Heart right ventricle (tissue), 16 donors: ENCODE measurements at regions of chr13 and their contacts with region 1.

Region 1: DNA sequence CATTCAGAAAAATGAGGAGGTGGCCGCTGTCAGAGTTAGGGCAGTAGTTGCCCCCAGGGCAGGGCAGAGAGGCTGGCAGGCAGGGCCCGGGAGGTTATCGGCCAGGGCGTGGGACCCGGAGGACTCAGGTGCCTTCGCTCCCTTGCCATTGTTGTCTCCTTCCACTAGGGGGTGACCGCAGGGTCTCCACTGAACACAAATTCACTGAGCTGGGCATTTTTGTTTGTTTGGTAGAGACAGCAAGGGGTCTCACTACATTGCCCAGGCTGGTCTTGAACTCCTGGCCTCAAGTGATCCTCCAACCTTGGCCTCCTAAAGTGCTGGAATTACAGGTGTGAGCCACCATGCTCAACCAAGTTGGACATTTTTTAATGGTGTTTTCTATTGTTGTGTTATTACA is 25.1 kb downstream of the CARS2 start:
- DNase-seq: no peak
- ATAC-seq: no peak
- H3K4me3 ChIP-seq: no peak overlapping the region
- H3K27ac ChIP-seq: no peak overlapping the region
- H3K4me1 ChIP-seq: peaks cover 0 to 11% (median 0%) of the 10 kb centered on the region in 9 donors
- H3K27me3 ChIP-seq: no peaks in the 10 kb centered on the region
- CTCF ChIP-seq: peak in 7 of 9 donors; percentile 26 to 51 (median 38)

Region 2: GRCh38 chr13:110593430-110594130 is 87.3 kb before region 1 on chr13:
- intact Hi-C with region 1: loop called in 1 of 10 experiments (anchors 10 kb)
- DNase-seq: no peak
- ATAC-seq: peak; percentile 68 to 93 (median 86)
- H3K4me3 ChIP-seq: no peak overlapping the region
- H3K27ac ChIP-seq: no peak overlapping the region
- H3K4me1 ChIP-seq: no peaks in the 10 kb centered on the region
- H3K27me3 ChIP-seq: no peaks in the 10 kb centered on the region
- CTCF ChIP-seq: peak; percentile 36 to 79 (median 68)

Region 3: DNA sequence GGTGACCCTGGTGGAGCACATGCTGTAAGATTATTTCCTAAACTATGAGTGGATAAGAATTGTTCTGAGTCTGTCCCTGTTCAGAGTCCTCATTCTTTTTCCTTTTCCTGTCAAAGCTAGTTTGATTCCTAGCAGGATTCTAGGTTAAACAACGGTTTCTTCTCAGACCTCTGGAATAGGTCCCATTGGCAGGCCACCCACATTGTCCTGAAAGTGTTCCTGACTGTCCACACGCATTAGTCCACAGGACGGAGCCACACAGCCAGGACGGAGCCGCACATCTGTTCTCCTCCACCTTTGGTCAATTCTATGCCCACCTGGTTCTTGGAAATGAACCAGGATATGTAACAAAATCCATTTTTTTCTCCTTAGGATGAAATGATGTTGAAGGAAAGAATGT is 187.9 kb after region 1 on chr13:
- intact Hi-C with region 1: no loop called
- DNase-seq: no peak
- ATAC-seq: peak in 2 of 8 donors; percentile 6 to 25
- H3K4me3 ChIP-seq: peak overlapping the region in 5 of 10 donors; percentile 51 to 59 (median 53)
- H3K27ac ChIP-seq: peak overlapping the region; percentile 11 to 96 (median 89)
- H3K4me1 ChIP-seq: peaks cover 7 to 30% (median 21%) of the 10 kb centered on the region in 9 donors
- H3K27me3 ChIP-seq: no peaks in the 10 kb centered on the region
- CTCF ChIP-seq: peak in 3 of 9 donors; percentile 3 to 27 (median 21)

Region 4: DNA sequence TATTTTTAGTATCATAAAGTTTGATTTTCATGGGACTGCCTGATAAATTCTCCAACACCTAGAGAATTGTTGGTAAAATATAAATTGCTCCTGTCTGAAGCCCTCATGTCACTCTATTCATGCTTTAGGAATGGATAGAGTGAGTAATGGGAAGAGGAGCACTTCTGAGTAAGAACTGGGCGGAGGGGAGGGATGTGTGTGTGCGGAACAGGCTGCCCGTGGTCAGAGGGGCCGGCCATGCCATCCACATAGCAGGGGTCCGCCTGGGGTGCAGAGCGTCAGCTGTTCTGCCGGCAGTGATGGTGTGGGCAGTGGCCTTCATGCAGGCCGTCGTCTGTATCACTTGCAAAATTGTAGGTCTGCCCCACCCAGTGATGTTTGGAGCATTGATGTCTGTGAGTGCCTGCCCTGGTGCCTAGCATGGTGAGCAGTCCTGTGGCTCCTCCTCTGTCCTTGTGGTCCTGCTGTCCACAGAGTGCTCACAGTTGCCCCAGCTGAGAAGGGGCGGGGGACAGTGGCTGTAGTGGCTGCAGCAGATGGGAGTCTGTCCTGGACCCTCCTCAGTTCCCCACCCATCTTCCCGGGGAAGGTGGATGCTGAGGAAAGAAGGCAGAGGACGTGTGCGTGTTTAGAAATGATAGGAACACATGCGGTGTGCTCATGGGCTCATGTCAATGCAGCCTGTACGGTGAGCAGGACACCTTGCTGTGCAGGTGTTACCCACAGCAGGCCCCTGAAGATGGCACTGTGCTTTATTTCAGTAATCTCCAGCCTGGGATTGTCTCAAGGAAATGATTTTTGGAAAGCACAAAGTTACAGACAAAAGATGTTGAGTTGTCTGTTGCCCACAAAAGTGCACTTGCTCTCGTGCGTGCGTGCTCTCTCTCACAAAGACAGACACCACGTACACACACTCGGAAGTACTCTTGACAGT is 590.2 kb after region 1 on chr13:
- intact Hi-C with region 1: no loop called
- DNase-seq: no peak
- ATAC-seq: peak in 1 of 8 donors; percentile 28
- H3K4me3 ChIP-seq: no peak overlapping the region
- H3K27ac ChIP-seq: peak overlapping the region in 2 of 10 donors; percentile 0 to 53
- H3K4me1 ChIP-seq: peaks cover 0 to 51% (median 16%) of the 10 kb centered on the region in 9 donors
- H3K27me3 ChIP-seq: no peaks in the 10 kb centered on the region
- CTCF ChIP-seq: no peak